ENCODE measurements at regions of chr10 and their contacts with region 1.

Region 1: DNA sequence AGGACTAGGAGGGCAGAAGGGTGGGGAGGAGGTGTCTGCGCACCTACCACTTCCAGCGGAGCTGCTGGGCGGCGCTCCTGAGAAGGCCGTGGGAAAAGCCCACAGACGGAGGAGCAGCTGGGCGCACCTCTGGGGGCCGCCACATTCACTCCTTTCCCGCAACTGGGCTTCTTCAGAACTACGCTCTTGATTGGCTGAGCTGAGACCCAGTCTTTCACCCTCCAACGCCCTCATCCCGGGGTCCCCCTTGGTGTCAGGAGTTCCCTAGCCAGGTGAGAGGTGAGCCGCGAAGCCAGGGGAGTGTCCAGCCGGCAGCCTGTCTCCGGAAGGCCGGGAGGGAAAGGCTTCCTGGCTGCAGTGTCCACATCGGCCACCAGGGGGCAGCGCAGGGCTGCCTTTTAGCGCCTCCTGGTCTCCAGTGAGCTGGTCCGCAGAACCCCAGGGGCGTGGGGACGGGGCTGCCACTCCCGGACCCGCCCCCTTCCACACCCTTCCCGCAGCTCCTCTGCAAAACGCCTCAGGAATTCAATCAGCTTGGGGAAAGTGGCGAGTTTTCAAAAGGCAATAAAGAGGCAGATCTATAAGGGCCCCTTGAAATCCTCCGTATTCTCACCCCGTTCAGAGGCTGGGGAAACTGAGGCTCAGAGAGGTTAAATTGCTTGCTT is 98.8 kb downstream of the CHST15 start:
- DNase-seq: peak; percentile 88 to 95 (median 95)
- ATAC-seq: peak; percentile 84 to 91
- H3K4me3 ChIP-seq: no peak overlapping the region
- H3K27ac ChIP-seq: no peak overlapping the region
- H3K4me1 ChIP-seq: no peaks in the 10 kb centered on the region
- H3K27me3 ChIP-seq: no peaks in the 10 kb centered on the region

Region 2: GRCh38 chr10:123655751-123656150 is 338.8 kb before region 1 on chr10:
- intact Hi-C with region 1: no loop called
- DNase-seq: no peak
- ATAC-seq: no peak
- H3K4me3 ChIP-seq: no peak overlapping the region
- H3K27ac ChIP-seq: no peak overlapping the region
- H3K4me1 ChIP-seq: no peaks in the 10 kb centered on the region
- H3K27me3 ChIP-seq: no peaks in the 10 kb centered on the region

Region 3: DNA sequence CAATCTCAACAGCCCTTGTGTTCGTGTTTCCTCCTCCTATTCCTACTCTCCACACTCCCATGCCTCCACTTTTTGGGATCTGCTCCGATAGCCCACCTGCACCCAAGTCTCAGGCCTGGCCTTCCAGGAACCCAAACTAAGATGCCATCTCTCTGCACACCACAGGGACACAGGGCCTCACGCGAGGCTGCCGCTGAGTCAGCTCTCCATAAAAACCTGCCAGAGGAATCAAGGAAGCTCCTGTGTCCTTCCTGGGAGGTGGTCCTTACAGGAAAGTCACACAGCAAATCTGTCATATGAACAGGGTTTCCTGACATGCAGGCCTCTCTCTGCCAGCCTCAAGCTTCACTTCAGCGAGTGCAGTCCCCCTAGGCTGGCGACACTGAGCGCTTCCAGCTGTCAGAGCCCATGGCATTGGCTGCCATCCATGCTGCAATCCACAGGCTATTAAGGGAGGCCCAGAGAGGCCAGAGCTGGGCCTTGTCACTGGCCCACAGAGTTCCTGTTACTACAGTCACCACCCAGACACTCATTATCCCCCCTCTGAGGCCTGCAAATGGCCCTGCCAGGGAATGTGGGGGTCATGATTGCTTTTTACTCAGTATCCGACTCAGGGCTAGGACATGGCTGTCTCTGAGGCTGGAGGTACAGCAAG is 272.8 kb after region 1 on chr10:
- intact Hi-C with region 1: loop called in 1 of 4 experiments (anchors 5 kb)
- DNase-seq: no peak
- ATAC-seq: peak; percentile 24 to 33
- H3K4me3 ChIP-seq: no peak overlapping the region
- H3K27ac ChIP-seq: no peak overlapping the region
- H3K4me1 ChIP-seq: no peaks in the 10 kb centered on the region
- H3K27me3 ChIP-seq: no peaks in the 10 kb centered on the region

Region 4: GRCh38 chr10:124388823-124389612 is 394.5 kb after region 1 on chr10:
- intact Hi-C with region 1: loop called (anchors 2 kb)
- DNase-seq: peak; percentile 88 to 97 (median 97)
- ATAC-seq: peak; percentile 98 to 99
- H3K4me3 ChIP-seq: peak overlapping the region; percentile 53
- H3K27ac ChIP-seq: no peak overlapping the region
- H3K4me1 ChIP-seq: no peaks in the 10 kb centered on the region
- H3K27me3 ChIP-seq: no peaks in the 10 kb centered on the region

Measured in right cardiac atrium (tissue), 5 donors.